ENCODE measurements at regions of chr6 and their contacts with region 1.

Region 1: DNA sequence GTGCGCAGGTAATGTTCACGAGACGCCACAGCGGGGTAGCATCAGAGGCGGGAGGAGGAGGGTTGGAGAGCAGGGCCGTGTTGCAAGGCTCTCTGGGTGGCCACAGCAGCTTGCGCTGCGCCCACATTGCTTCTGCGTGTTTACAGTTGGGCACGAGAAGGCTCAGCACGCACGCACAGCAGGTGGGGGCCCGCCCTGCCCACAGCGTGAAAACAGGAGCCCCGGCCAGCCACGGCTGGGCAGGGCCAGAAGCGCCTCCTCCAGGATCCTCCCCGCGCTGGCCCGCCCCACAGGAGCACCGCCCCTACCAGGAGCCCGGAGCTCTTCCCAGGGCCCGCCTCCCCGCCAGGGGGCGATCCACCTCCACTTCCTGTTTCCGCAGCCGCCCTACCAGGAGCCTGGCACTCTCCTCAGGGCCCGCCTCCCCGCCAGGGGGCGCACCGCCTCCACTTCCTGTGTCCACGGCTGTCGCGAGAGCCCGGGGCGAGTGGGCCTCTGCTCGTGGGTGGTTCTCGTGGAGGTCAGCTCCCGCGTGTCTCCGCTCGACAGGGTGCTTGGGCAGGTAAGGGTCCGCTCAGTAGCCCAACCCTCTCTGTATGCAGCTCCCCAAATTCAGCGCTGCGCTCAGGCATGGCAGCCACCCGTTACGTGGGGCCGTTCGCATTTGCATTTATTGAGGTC is at the start of gene FAM50B:
- DNase-seq: peak; percentile 95
- ATAC-seq: peak; percentile 87
- H3K4me3 Mint-ChIP-seq: peak within 1 kb of the TSS; percentile 73
- H3K27ac Mint-ChIP-seq: peak within 1 kb of the TSS; percentile 85
- H3K4me1 Mint-ChIP-seq: peaks cover 30% of the 10 kb centered on the region
- H3K27me3 Mint-ChIP-seq: no peaks in the 10 kb centered on the region
- total RNA-seq, gene FAM50B: 8.8 to 10.2 TPM

Region 2: DNA sequence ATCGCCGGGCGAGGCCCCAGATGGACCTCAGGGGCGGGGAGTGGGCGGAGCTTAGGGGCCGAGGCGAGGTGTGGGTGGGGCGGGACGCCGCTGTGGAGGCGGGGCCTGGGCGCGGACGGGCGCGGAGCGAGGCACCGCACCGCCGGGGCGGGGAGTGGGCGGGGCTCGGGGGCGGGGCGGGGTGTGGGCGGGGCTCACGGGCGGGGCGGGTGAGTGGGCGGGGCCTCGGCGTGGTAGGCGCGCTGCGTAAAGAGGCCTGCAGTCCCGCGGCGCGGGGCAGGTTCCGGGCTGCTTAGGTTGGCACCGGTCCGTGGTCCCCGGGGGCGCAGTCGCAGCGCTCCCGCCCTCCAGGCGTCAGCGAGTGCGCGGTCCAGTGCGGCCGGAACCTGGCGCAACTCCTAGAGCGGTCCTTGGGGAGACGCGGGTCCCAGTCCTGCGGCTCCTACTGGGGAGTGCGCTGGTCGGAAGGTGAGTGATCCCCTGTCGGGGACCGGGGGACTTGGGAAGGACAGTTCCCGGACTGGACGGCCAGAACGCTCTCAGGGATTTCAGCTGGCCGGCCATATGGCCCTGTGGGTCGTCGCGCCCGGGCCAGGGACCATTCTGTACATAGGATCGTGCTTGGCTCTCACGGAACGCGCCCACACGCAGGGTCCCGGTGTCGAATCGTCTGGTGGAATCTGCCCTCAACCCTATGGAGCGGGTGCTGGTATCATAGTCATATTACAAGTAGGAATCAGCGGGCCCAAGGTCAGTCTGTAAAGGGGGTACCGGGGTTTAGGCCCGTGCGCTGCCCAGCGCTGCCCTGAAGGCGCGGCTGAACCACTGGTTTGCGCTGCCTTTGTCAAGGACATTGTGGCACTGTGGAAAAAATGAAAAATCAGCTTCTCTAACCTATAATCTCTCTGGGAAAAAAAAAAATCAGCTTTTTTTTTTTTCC is 849.2 kb before region 1 on chr6 and contains the start of gene NQO2:
- CTCF ChIA-PET with region 1: no interaction called
- POLR2A ChIA-PET with region 1: no interaction called
- intact Hi-C with region 1: no loop called
- DNase-seq: peak; percentile 96
- ATAC-seq: peak; percentile 80
- H3K4me3 Mint-ChIP-seq: peak within 1 kb of the TSS; percentile 83
- H3K27ac Mint-ChIP-seq: peak within 1 kb of the TSS; percentile 82
- H3K4me1 Mint-ChIP-seq: peaks cover 28% of the 10 kb centered on the region
- H3K27me3 Mint-ChIP-seq: no peaks in the 10 kb centered on the region
- total RNA-seq, gene NQO2: 40.7 to 44.2 TPM

Region 3: GRCh38 chr6:3835055-3835731 is 13.9 kb before region 1 on chr6:
- CTCF ChIA-PET with region 1: interaction called, 11 read pairs
- POLR2A ChIA-PET with region 1: no interaction called
- intact Hi-C with region 1: no loop called
- DNase-seq: no peak
- ATAC-seq: no peak
- H3K4me3 Mint-ChIP-seq: no peak overlapping the region
- H3K27ac Mint-ChIP-seq: no peak overlapping the region
- H3K4me1 Mint-ChIP-seq: no peaks in the 10 kb centered on the region
- H3K27me3 Mint-ChIP-seq: peaks cover 5% of the 10 kb centered on the region

Region 4: GRCh38 chr6:3887150-3887700 is 38.2 kb after region 1 on chr6:
- CTCF ChIA-PET with region 1: interaction called, 7 read pairs
- POLR2A ChIA-PET with region 1: no interaction called
- intact Hi-C with region 1: loop called in 1 of 2 experiments (anchors 1 kb)
- DNase-seq: peak; percentile 14
- ATAC-seq: peak; percentile 23
- H3K4me3 Mint-ChIP-seq: no peak overlapping the region
- H3K27ac Mint-ChIP-seq: no peak overlapping the region
- H3K4me1 Mint-ChIP-seq: no peaks in the 10 kb centered on the region
- H3K27me3 Mint-ChIP-seq: peaks cover 2% of the 10 kb centered on the region

Region 5: DNA sequence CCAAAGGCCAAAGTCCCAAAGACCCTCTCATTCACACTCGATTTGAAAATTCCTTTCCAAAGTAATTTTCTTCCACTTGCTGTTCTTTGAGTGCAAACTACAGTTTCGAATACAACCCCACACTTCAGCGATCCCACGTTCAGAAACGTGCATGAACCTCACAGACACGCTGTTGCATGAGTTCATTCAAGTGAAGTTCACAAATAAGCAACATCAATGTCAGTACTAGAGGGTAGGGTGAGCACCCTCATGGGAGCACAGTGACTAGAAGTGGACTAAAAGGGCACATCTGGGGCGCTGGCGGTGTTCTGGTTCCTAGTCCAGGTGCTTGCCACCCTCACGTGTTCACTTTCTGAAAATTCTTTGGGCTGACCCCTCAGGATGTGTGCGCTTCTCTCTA is 59.2 kb after region 1 on chr6:
- CTCF ChIA-PET with region 1: no interaction called
- POLR2A ChIA-PET with region 1: no interaction called
- intact Hi-C with region 1: no loop called
- DNase-seq: no peak
- ATAC-seq: no peak
- H3K4me3 Mint-ChIP-seq: no peak overlapping the region
- H3K27ac Mint-ChIP-seq: no peak overlapping the region
- H3K4me1 Mint-ChIP-seq: peaks cover 1% of the 10 kb centered on the region
- H3K27me3 Mint-ChIP-seq: peaks cover 13% of the 10 kb centered on the region

Region 6: DNA sequence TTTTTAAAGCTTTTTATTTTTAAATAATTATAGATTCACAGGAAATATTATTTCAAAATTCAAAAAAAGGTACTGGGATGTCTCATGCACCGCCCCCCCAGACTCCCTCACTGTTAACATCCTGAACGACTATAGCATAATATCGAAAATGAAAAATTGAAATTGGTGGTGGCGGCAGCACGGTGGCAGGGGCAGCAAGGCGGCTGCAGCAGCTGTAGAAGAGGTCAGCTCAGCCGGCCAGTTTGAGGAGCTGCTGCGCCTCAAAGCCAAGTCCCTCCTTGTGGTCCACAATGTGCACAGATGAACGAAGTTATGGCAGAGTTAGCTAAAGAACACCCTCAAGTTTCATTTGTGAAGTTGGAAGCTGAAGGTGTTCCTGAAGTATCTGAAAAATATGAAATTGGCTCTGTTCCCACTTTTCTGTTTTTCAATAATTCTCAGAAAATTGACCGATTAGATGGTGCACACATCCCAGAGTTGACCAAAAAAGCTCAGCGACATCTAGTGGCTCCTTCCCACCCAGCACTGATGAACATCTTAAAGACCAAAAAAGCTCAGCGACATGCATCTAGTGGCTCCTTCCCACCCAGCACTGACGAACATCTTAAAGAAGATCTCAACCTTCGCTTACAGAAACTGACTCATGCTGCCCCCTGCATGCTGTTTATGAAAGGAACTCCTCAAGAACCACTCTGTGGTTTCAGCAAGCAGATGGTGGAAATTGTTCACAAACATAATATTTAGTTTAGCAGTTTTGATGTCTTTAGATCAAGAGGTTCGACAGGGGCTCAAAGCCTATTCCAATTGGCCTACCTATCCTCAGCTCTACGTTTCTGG is 129.0 kb after region 1 on chr6:
- CTCF ChIA-PET with region 1: interaction called, 24 read pairs
- POLR2A ChIA-PET with region 1: no interaction called
- intact Hi-C with region 1: loop called in 1 of 2 experiments (anchors 1 kb)
- DNase-seq: peak; percentile 68
- ATAC-seq: peak; percentile 99
- H3K4me3 Mint-ChIP-seq: no peak overlapping the region
- H3K27ac Mint-ChIP-seq: no peak overlapping the region
- H3K4me1 Mint-ChIP-seq: peaks cover 11% of the 10 kb centered on the region
- H3K27me3 Mint-ChIP-seq: peaks cover 2% of the 10 kb centered on the region

Region 7: GRCh38 chr6:4055420-4056041 is 206.5 kb after region 1 on chr6:
- CTCF ChIA-PET with region 1: no interaction called
- POLR2A ChIA-PET with region 1: no interaction called
- intact Hi-C with region 1: loop called in 1 of 2 experiments (anchors 5 kb)
- DNase-seq: peak; percentile 16
- ATAC-seq: no peak
- H3K4me3 Mint-ChIP-seq: no peak overlapping the region
- H3K27ac Mint-ChIP-seq: no peak overlapping the region
- H3K4me1 Mint-ChIP-seq: peaks cover 35% of the 10 kb centered on the region
- H3K27me3 Mint-ChIP-seq: no peaks in the 10 kb centered on the region

Region 8: GRCh38 chr6:4180652-4181255 is 331.7 kb after region 1 on chr6:
- CTCF ChIA-PET with region 1: no interaction called
- POLR2A ChIA-PET with region 1: no interaction called
- intact Hi-C with region 1: no loop called
- DNase-seq: no peak
- ATAC-seq: no peak
- H3K4me3 Mint-ChIP-seq: no peak overlapping the region
- H3K27ac Mint-ChIP-seq: no peak overlapping the region
- H3K4me1 Mint-ChIP-seq: peaks cover 9% of the 10 kb centered on the region
- H3K27me3 Mint-ChIP-seq: peaks cover 9% of the 10 kb centered on the region

Measured in activated CD4-positive, alpha-beta T cell treated with anti-CD3 and anti-CD28 coated beads for 36 hours (primary cell).